GM12878 (cell line): ENCODE measurements at regions of chr10 and their contacts with region 1.

Region 1: DNA sequence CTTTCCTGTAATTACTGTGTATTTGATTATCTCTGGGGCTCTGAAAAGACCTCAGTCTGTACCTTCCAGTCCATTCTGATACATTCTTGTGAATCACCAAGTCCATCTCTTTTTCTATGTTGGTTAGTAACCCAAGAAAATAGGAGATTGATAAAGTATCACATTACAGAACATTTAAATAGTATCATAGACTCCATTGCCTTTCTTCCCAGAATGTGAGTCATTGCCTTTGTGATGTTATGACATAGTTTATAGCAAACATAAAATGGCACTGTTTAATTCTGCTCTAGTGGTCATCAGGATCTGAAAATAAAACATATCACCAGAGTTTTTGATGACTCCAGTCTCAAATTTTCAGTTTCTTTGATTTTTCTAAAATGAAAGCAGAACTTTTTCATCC is 78.4 kb downstream of the NRG3 start:
- DNase-seq: no peak
- ATAC-seq: no peak
- H3K4me3 ChIP-seq: no peak overlapping the region
- H3K27ac ChIP-seq: no peak overlapping the region
- H3K4me1 ChIP-seq: no peaks in the 10 kb centered on the region
- H3K27me3 ChIP-seq: no peaks in the 10 kb centered on the region
- CTCF ChIP-seq: no peak
- EP300 ChIP-seq: no peak
- POLR2A ChIP-seq: no peak
- RAD21 ChIP-seq: no peak

Region 2: GRCh38 chr10:81679291-81679690 is 274.1 kb before region 1 on chr10:
- CTCF ChIA-PET with region 1: no interaction called
- POLR2A ChIA-PET with region 1: no interaction called
- RAD21 ChIA-PET with region 1: no interaction called
- SMC1A ChIA-PET with region 1: no interaction called
- in situ Hi-C with region 1: no loop called
- intact Hi-C with region 1: loop called (anchors 10 kb)
- DNase-seq: no peak
- ATAC-seq: no peak
- H3K4me3 ChIP-seq: no peak overlapping the region
- H3K27ac ChIP-seq: no peak overlapping the region
- H3K4me1 ChIP-seq: no peaks in the 10 kb centered on the region
- H3K27me3 ChIP-seq: no peaks in the 10 kb centered on the region
- CTCF ChIP-seq: no peak
- EP300 ChIP-seq: no peak
- POLR2A ChIP-seq: no peak
- RAD21 ChIP-seq: no peak

Region 3: GRCh38 chr10:81978238-81978637 is 24.8 kb after region 1 on chr10:
- CTCF ChIA-PET with region 1: no interaction called
- POLR2A ChIA-PET with region 1: no interaction called
- RAD21 ChIA-PET with region 1: no interaction called
- SMC1A ChIA-PET with region 1: no interaction called
- in situ Hi-C with region 1: no loop called
- intact Hi-C with region 1: no loop called
- DNase-seq: no peak
- ATAC-seq: no peak
- H3K4me3 ChIP-seq: no peak overlapping the region
- H3K27ac ChIP-seq: no peak overlapping the region
- H3K4me1 ChIP-seq: no peaks in the 10 kb centered on the region
- H3K27me3 ChIP-seq: no peaks in the 10 kb centered on the region
- CTCF ChIP-seq: no peak
- EP300 ChIP-seq: no peak
- POLR2A ChIP-seq: no peak
- RAD21 ChIP-seq: no peak